ENCODE measurements at regions of chr10 and their contacts with region 1.

Region 1: GRCh38 chr10:24449321-24449740 is 240.4 kb downstream of the KIAA1217 start:
- DNase-seq: peak; percentile 43
- H3K4me3 ChIP-seq: peak overlapping the region in 2 of 3 experiments; percentile 18 to 44
- H3K27ac ChIP-seq: peak overlapping the region; percentile 45
- H3K4me1 ChIP-seq: peaks cover 12% of the 10 kb centered on the region
- H3K27me3 ChIP-seq: no peaks in the 10 kb centered on the region
- CTCF ChIP-seq: no peak
- POLR2A ChIP-seq: no peak

Region 2: DNA sequence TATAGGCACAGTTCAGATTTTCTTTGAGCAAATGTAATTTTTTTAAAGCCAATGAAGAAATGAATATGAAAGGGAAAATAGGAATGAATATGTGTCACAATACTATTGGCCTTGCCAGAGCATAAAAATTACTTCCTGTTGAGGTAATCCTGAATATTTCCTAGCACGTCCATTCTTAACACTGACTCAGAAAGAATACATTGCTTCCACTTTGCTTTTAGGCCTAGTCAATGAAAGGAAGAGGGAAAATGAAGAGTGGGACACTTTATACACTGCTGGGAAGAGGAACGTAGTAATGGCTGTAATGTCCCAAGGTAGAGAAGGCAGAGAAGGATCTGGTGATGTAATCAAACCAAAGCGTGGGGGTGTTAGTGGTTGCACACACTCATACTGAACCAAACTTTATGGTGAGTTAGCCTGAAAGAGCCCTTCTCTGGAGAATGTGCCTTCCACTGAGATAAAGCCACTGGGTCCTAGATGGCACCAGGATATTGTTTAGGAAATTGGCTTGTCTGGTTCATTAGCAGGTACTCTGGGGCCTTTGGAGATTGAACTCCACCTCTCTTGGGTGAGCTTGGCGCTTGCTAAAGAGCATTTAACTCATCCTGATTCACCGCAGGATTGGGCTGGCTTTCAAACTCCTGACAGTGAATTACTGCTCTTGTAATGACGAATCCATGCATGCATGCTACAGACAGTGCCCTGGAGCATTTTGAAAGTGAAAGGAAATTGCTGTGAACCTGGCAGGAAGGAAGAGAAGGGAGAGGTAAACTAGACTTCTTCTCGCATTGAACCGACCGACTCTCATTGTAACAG is 14.5 kb after region 1 on chr10:
- CTCF ChIA-PET with region 1: interaction called, 3 read pairs
- POLR2A ChIA-PET with region 1: no interaction called
- dilution Hi-C with region 1: no loop called
- intact Hi-C with region 1: loop called (anchors 1 kb)
- DNase-seq: peak; percentile 13
- H3K4me3 ChIP-seq: no peak overlapping the region
- H3K27ac ChIP-seq: peak overlapping the region; percentile 45
- H3K4me1 ChIP-seq: peaks cover 6% of the 10 kb centered on the region
- H3K27me3 ChIP-seq: no peaks in the 10 kb centered on the region
- CTCF ChIP-seq: no peak
- POLR2A ChIP-seq: no peak

Region 3: DNA sequence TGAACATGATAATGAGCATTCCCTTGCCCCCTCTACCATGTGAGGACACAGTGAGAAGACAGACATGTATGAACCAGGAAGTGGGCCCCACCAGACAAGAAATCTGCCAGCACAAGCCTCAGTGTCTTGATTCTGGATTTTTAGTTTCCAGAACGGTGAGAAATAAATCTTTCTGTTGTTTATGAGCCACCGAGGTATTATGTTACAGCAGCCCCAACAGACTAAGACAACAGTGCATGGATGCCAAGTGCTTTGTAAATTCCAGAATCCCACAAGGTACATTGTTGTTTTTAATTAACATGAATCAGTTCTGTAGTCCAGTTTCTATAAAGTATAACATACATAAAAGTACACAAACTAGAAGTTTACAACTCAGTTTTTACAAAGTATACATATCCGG is 112.1 kb after region 1 on chr10:
- CTCF ChIA-PET with region 1: no interaction called
- POLR2A ChIA-PET with region 1: no interaction called
- dilution Hi-C with region 1: no loop called
- intact Hi-C with region 1: no loop called
- DNase-seq: no peak
- H3K4me3 ChIP-seq: no peak overlapping the region
- H3K27ac ChIP-seq: no peak overlapping the region
- H3K4me1 ChIP-seq: peaks cover 2% of the 10 kb centered on the region
- H3K27me3 ChIP-seq: peaks cover 0 to 3% of the 10 kb centered on the region in 2 experiments
- CTCF ChIP-seq: no peak
- POLR2A ChIP-seq: no peak

Region 4: GRCh38 chr10:24617771-24618391 is 168.6 kb after region 1 on chr10:
- CTCF ChIA-PET with region 1: no interaction called
- POLR2A ChIA-PET with region 1: no interaction called
- dilution Hi-C with region 1: no loop called
- intact Hi-C with region 1: no loop called
- DNase-seq: peak; percentile 59
- H3K4me3 ChIP-seq: no peak overlapping the region
- H3K27ac ChIP-seq: no peak overlapping the region
- H3K4me1 ChIP-seq: no peaks in the 10 kb centered on the region
- H3K27me3 ChIP-seq: no peaks in the 10 kb centered on the region
- CTCF ChIP-seq: peak; percentile 82 to 87
- POLR2A ChIP-seq: no peak

Measured in endothelial cell of umbilical vein (primary cell).